ENCODE measurements at regions of chr6 and their contacts with region 1.

Region 1: GRCh38 chr6:136723780-136724179 is 68.5 kb downstream of the MAP3K5 start:
- DNase-seq: no peak
- ATAC-seq: no peak
- H3K4me3 ChIP-seq: no peak overlapping the region
- H3K27ac ChIP-seq: no peak overlapping the region
- H3K4me1 ChIP-seq: no peaks in the 10 kb centered on the region
- H3K27me3 ChIP-seq: no peaks in the 10 kb centered on the region
- CTCF ChIP-seq: no peak

Region 2: GRCh38 chr6:136439514-136440190 is 284.1 kb before region 1 on chr6:
- CTCF ChIA-PET with region 1: no interaction called
- POLR2A ChIA-PET with region 1: no interaction called
- in situ Hi-C with region 1: no loop called
- intact Hi-C with region 1: no loop called
- DNase-seq: no peak
- ATAC-seq: no peak
- H3K4me3 ChIP-seq: no peak overlapping the region
- H3K27ac ChIP-seq: no peak overlapping the region
- H3K4me1 ChIP-seq: no peaks in the 10 kb centered on the region; the same call in 1 of the 2 replicates
- H3K27me3 ChIP-seq: 0 out of 2 replicates have a peak, but pooled peaks cover 2% of the 10 kb centered on the region
- CTCF ChIP-seq: no peak

Region 3: DNA sequence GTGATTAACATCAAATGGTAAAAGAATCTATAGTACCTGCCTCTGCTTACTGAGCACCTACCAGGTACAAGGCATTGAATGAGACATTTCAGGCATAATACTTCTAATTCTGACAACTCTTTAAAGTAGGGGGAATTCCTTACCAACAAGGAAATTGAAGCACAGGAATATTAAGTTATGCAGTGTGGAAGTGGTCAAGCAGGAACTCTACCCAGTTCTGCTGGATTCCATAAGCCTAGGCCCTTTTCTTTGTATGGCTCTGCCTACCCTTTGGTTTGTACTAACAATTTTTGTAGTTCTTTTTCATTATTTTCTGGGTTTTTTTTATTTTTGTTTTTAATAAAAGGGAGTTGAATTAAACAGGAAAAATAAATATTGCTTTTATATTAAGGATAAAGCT is 45.9 kb before region 1 on chr6:
- CTCF ChIA-PET with region 1: no interaction called
- POLR2A ChIA-PET with region 1: no interaction called
- in situ Hi-C with region 1: no loop called
- intact Hi-C with region 1: loop called (anchors 5 kb)
- DNase-seq: no peak
- ATAC-seq: no peak
- H3K4me3 ChIP-seq: no peak overlapping the region
- H3K27ac ChIP-seq: peak overlapping the region; percentile 44; the same call in 1 of the 2 replicates
- H3K4me1 ChIP-seq: peaks cover 4% of the 10 kb centered on the region; the same call in 1 of the 2 replicates
- H3K27me3 ChIP-seq: no peaks in the 10 kb centered on the region
- CTCF ChIP-seq: no peak

Measured in Panc1 (cell line).